ENCODE measurements at regions of chr4 and their contacts with region 1.

Region 1: GRCh38 chr4:40840985-40841571 is 91.3 kb downstream of the NSUN7 start:
- DNase-seq: peak; percentile 86
- ATAC-seq: peak; percentile 79
- H3K4me3 Mint-ChIP-seq: no peak overlapping the region
- H3K27ac Mint-ChIP-seq: no peak overlapping the region
- H3K4me1 Mint-ChIP-seq: peaks cover 4% of the 10 kb centered on the region
- H3K27me3 Mint-ChIP-seq: peaks cover 17% of the 10 kb centered on the region

Region 2: GRCh38 chr4:40736910-40737309 is 104.2 kb before region 1 on chr4:
- CTCF ChIA-PET with region 1: interaction called, 149 read pairs
- DNase-seq: no peak
- ATAC-seq: peak; percentile 39
- H3K4me3 Mint-ChIP-seq: no peak overlapping the region
- H3K27ac Mint-ChIP-seq: no peak overlapping the region
- H3K4me1 Mint-ChIP-seq: peaks cover 10% of the 10 kb centered on the region
- H3K27me3 Mint-ChIP-seq: peaks cover 15% of the 10 kb centered on the region